ENCODE measurements at regions of chr4 and their contacts with region 1.

Region 1: DNA sequence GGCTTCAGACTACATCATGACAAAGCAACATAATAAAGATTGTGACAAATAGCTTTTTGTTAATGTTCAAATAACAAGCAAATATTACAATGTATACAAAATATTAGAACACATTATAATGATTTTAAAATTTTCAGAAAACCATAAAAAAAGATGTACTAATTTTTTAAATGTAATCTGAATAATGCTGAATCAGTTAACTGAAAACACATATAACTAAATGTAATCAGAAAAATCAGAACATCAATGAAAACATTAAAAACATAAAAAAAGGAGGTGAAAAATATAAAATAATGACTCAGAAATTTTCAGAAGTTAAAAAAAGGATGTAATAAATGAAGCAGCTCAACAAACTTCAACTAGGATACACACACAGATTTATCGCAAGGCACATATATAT is 53.5 kb downstream of the ZNF721 start:
- DNase-seq: no peak
- H3K4me3 ChIP-seq: no peak overlapping the region
- H3K27ac ChIP-seq: no peak overlapping the region
- H3K4me1 ChIP-seq: no peaks in the 10 kb centered on the region
- H3K27me3 ChIP-seq: no peaks in the 10 kb centered on the region
- CTCF ChIP-seq: no peak
- POLR2A ChIP-seq: no peak

Region 2: DNA sequence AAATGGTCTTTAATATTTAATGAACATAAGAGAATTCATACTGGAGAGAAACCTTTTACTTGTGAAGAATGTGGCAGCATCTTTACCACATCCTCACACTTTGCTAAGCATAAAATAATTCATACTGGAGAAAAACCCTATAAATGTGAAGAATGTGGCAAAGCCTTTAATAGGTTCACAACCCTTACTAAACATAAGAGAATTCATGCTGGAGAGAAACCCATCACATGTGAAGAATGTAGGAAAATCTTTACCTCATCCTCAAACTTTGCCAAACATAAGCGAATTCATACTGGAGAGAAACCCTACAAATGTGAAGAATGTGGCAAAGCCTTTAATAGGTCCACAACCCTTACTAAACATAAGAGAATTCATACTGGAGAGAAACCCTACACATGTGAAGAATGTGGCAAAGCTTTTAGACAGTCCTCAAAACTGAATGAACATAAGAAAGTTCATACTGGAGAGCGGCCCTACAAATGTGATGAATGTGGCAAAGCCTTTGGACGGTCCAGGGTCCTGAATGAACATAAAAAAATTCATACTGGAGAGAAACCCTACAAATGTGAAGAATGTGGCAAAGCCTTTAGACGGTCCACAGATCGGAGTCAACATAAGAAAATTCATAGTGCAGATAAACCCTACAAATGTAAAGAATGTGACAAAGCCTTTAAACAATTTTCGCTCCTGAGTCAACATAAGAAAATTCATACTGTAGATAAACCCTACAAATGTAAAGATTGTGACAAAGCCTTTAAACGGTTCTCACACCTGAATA is 72.2 kb before region 1 on chr4:
- intact Hi-C with region 1: loop called (anchors 10 kb)
- DNase-seq: no peak
- H3K4me3 ChIP-seq: peak overlapping the region in 1 of 8 donors; percentile 7
- H3K27ac ChIP-seq: no peak overlapping the region
- H3K4me1 ChIP-seq: no peaks in the 10 kb centered on the region
- H3K27me3 ChIP-seq: no peaks in the 10 kb centered on the region
- CTCF ChIP-seq: no peak
- POLR2A ChIP-seq: no peak

Region 3: DNA sequence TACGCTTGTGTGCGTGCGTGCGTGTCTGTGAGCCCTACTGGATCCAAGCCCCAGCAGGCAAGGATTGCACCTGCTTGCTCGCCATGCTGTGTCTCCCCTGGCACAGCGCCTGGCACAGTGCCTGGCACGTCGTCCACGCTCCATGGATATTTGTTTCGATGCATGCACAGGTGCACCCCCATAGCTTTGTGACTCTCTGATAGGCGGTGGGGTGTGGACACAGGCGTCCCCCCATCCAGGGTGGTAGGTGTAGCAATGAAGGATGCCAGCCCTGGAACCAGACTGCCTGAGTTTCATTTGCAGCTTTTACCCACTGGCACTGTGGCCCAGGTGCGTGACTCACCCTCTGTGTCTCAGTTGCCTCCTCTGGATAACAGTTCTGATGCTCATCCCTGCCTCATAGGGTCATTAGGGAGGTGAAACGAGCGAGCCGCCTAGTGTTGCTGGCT is 73.8 kb after region 1 on chr4:
- intact Hi-C with region 1: no loop called
- DNase-seq: peak; percentile 58
- H3K4me3 ChIP-seq: no peak overlapping the region
- H3K27ac ChIP-seq: no peak overlapping the region
- H3K4me1 ChIP-seq: no peaks in the 10 kb centered on the region
- H3K27me3 ChIP-seq: no peaks in the 10 kb centered on the region
- CTCF ChIP-seq: no peak
- POLR2A ChIP-seq: no peak

Measured in spleen (tissue), 13 donors.